Prostate gland (tissue), 2 donors: ENCODE measurements at regions of chr3 and their contacts with region 1.

Region 1: GRCh38 chr3:156142702-156143101 is 22.3 kb downstream of the KCNAB1 start:
- DNase-seq: no peak
- H3K4me3 ChIP-seq: no peak overlapping the region
- H3K27ac ChIP-seq: no peak overlapping the region
- H3K4me1 ChIP-seq: peaks cover 4% of the 10 kb centered on the region
- H3K27me3 ChIP-seq: no peaks in the 10 kb centered on the region
- CTCF ChIP-seq: no peak
- POLR2A ChIP-seq: no peak

Region 2: DNA sequence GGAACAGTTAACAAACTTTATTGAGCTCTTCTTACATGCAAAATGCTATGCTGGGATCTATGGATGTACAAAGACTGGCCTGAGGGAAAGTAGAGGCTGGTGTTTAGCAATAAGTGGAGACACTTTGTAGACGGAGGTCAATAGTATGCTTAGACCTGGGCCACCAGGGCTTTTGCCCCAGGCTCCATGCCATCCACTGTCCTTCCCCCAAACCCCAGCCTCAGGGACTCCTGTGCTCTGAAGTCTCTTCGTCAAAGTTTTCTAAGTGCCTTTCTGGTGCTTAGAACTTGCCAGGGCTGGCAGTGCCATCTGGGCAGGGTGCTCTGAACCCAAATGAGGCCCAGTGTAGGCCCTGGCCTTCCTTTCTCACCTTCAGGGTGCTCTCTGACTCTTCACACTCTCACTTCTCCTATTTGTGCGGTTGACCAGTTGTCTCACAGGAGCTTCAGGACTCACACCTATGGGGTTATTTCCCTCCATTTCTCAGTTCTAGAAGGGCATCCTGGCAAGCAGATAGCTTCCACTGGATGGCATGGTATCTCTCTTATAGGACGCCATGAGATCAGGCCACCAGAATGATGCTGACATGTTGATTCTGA is 44.2 kb before region 1 on chr3:
- intact Hi-C with region 1: loop called (anchors 5 kb)
- DNase-seq: no peak
- H3K4me3 ChIP-seq: no peak overlapping the region
- H3K27ac ChIP-seq: no peak overlapping the region
- H3K4me1 ChIP-seq: no peaks in the 10 kb centered on the region
- H3K27me3 ChIP-seq: no peaks in the 10 kb centered on the region
- CTCF ChIP-seq: no peak
- POLR2A ChIP-seq: no peak

Region 3: GRCh38 chr3:156507285-156507684 is 364.6 kb after region 1 on chr3:
- intact Hi-C with region 1: no loop called
- DNase-seq: no peak
- H3K4me3 ChIP-seq: no peak overlapping the region
- H3K27ac ChIP-seq: no peak overlapping the region
- H3K4me1 ChIP-seq: no peaks in the 10 kb centered on the region
- H3K27me3 ChIP-seq: no peaks in the 10 kb centered on the region
- CTCF ChIP-seq: no peak
- POLR2A ChIP-seq: no peak